OCI-LY7 (cell line): ENCODE measurements at regions of chr19 and their contacts with region 1.

Region 1: GRCh38 chr19:32471095-32471494 is 65.5 kb downstream of the DPY19L3 start:
- DNase-seq: no peak
- H3K4me3 ChIP-seq: no peak overlapping the region
- H3K27ac ChIP-seq: no peak overlapping the region
- H3K4me1 ChIP-seq: no peaks in the 10 kb centered on the region
- CTCF ChIP-seq: no peak

Region 2: DNA sequence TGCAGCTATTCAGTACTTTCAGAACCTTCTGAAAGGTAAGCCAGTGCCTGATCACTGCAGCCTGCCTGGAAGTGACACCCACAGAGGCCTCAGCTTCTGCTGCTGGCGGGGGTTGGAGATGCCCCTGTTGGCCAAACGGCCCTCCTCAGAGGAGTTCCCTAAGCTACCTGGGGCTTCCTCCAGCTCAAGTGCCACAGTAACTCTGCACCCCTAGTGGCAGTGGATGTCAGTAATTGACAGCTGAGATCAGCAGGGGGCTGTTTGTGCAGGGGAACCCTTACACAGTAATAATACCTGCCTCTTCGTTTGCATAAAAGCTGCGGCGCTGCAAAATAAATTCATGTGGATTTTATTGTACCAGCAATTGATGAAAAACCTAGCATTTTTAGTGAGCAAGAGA is 277.4 kb after region 1 on chr19:
- CTCF ChIA-PET with region 1: no interaction called
- POLR2A ChIA-PET with region 1: interaction called, 10 read pairs
- intact Hi-C with region 1: no loop called
- DNase-seq: peak; percentile 38
- H3K4me3 ChIP-seq: no peak overlapping the region
- H3K27ac ChIP-seq: no peak overlapping the region
- H3K4me1 ChIP-seq: no peaks in the 10 kb centered on the region
- CTCF ChIP-seq: peak; percentile 64